Sigmoid colon (tissue), 7 donors: ENCODE measurements at regions of chr10 and their contacts with region 1.

Region 1: DNA sequence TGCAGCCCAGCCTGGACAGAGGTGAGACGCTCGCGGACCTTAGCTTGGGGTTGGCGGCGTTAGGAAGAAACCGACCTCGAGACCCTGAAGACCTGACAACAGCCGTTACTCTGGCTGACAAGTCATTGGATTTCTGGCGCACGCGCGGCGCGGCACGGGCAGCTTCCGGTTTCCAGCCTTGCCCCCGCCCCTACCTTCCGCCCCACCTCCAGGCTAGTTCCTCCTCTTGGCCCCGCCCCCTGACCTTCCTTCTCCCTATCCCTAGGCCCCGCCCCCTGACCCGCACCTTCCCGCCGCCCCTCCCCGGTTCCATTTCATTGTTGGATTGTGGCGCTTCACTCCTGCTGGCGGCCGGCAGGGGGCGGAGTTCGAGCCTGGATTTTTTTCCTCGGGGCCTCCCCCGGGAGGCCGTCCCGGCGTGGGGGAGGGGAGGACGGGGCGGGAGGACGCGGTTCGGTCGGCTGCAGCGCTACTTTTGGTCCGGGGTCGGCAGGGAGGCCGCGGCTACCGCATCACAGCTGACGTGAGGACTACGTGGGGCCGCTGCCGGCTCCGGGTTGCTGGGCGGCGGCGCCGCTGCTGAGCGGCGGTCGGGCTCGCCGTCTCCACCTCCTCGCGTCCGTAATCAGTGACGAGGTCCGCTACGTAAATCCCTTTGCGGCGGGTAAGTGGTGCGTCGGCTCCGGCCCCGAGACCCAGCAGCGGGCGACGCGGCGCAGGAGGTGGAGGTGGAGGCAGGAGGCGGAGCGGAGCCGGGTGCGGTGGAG is at the start of gene CREM:
- DNase-seq: peak; percentile 100
- H3K4me3 ChIP-seq: peak within 1 kb of the TSS; percentile 66 to 98 (median 83)
- H3K27ac ChIP-seq: peak within 1 kb of the TSS; percentile 97 to 100 (median 98)
- H3K4me1 ChIP-seq: peaks cover 0 to 28% (median 13%) of the 10 kb centered on the region in 4 donors
- H3K27me3 ChIP-seq: no peaks in the 10 kb centered on the region
- CTCF ChIP-seq: peak; percentile 72 to 98 (median 88)
- EP300 ChIP-seq: peak; percentile 68 to 93 (median 82)
- POLR2A ChIP-seq: peak; percentile 94 to 95
- total RNA-seq, gene CREM: 37.5 to 76.0 (median 45.3) TPM

Region 2: GRCh38 chr10:35090162-35090954 is 36.4 kb before region 1 on chr10 and contains the start of gene CUL2:
- intact Hi-C with region 1: loop called (anchors 1 kb)
- DNase-seq: peak; percentile 96
- H3K4me3 ChIP-seq: peak within 1 kb of the TSS; percentile 64 to 95 (median 82)
- H3K27ac ChIP-seq: peak within 1 kb of the TSS; percentile 89 to 96 (median 93)
- H3K4me1 ChIP-seq: peaks cover 0 to 33% (median 26%) of the 10 kb centered on the region in 4 donors
- H3K27me3 ChIP-seq: no peaks in the 10 kb centered on the region
- CTCF ChIP-seq: no peak
- EP300 ChIP-seq: peak in 1 of 4 donors; percentile 25
- POLR2A ChIP-seq: no peak
- total RNA-seq, gene CUL2: 22.5 to 37.1 (median 25.9) TPM

Region 3: DNA sequence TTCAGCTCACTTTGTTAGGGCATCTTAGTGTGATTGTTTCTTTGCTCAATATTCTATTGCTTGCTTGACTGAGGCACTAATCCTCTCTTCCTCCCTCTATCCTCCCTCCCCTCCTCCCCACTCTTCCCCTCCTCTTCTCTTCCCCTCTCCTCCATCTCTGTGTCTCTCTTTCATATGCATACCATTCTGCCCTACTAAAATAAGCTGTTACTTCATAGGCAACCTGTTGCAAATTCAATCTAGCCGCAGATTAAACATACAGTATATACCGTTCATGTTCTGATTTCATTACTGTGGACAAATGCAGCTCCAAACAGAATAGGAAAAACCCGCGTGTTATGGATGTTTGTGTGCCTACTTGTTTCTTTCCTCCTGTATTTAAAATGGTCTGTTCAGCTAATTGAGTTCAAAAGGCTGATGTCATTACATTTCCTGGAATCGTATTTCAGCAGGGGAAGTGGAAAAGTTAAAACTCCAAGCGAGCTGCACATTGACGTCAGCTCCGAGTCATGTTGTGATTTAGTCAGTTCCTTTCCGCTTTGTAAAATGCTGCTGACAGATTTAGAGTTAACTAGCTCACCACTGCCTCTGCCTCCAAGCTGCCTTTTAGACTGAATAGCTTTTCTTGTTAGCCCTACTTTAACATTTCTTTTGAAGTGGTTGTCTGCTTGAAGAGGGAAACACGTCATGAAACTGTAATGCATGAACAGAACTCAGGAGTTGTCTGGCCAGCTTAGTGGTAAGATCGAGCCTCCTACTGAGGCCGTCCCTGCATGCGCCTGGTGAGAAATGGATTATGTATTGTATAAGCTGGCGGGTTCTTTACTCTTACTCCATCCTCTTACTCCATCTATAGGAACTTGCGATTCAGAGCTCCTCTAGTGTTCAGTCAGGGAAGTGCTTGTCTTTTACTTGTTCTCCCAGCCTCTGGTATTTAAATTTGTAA is 68.9 kb after region 1 on chr10:
- intact Hi-C with region 1: loop called (anchors 1 kb)
- DNase-seq: peak; percentile 92
- H3K4me3 ChIP-seq: peak overlapping the region; percentile 23 to 51 (median 48)
- H3K27ac ChIP-seq: peak overlapping the region; percentile 89 to 95 (median 93)
- H3K4me1 ChIP-seq: peaks cover 0 to 9% (median 7%) of the 10 kb centered on the region in 4 donors
- H3K27me3 ChIP-seq: no peaks in the 10 kb centered on the region
- CTCF ChIP-seq: peak; percentile 87 to 97 (median 93)
- EP300 ChIP-seq: peak; percentile 79 to 95 (median 90)
- POLR2A ChIP-seq: peak; percentile 5 to 25

Region 4: GRCh38 chr10:35218339-35218955 is 91.7 kb after region 1 on chr10:
- intact Hi-C with region 1: loop called (anchors 1 kb)
- DNase-seq: peak; percentile 92
- H3K4me3 ChIP-seq: peak overlapping the region in 1 of 4 donors; percentile 11
- H3K27ac ChIP-seq: peak overlapping the region in 3 of 4 donors; percentile 7 to 46 (median 27)
- H3K4me1 ChIP-seq: peaks cover 0 to 10% (median 0%) of the 10 kb centered on the region in 4 donors
- H3K27me3 ChIP-seq: no peaks in the 10 kb centered on the region
- CTCF ChIP-seq: peak; percentile 77 to 87 (median 83)
- EP300 ChIP-seq: no peak
- POLR2A ChIP-seq: no peak

Region 5: DNA sequence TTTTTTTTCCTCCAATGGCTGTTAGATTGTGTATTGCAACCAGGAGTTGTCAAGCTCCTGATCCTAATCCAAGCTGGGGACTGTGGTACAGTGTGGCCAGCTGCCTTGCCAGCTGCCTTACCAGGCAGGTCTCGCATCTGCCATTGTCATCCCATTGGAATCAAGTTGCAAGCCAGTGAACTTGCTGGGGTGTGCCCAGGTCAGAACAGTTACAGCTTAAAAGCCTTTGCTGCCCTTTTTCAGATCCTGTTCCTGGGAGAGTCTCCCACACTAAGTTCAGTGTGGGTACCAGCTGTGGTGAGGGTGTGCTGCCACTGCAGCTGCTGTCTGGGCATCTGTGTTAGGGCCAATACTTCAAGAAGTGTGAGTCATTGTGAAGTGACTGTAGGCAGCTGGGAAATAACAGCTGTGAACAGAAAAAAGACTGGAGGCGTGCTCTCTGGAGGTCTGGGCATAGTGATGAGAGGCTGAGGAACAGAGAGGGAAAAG is 282.4 kb after region 1 on chr10:
- intact Hi-C with region 1: no loop called
- DNase-seq: peak; percentile 80
- H3K4me3 ChIP-seq: no peak overlapping the region
- H3K27ac ChIP-seq: peak overlapping the region in 3 of 4 donors; percentile 70 to 74 (median 72)
- H3K4me1 ChIP-seq: peaks cover 0 to 53% (median 48%) of the 10 kb centered on the region in 4 donors
- H3K27me3 ChIP-seq: no peaks in the 10 kb centered on the region
- CTCF ChIP-seq: no peak
- EP300 ChIP-seq: no peak
- POLR2A ChIP-seq: no peak